ENCODE measurements at regions of chr2 and their contacts with region 1.

Region 1: DNA sequence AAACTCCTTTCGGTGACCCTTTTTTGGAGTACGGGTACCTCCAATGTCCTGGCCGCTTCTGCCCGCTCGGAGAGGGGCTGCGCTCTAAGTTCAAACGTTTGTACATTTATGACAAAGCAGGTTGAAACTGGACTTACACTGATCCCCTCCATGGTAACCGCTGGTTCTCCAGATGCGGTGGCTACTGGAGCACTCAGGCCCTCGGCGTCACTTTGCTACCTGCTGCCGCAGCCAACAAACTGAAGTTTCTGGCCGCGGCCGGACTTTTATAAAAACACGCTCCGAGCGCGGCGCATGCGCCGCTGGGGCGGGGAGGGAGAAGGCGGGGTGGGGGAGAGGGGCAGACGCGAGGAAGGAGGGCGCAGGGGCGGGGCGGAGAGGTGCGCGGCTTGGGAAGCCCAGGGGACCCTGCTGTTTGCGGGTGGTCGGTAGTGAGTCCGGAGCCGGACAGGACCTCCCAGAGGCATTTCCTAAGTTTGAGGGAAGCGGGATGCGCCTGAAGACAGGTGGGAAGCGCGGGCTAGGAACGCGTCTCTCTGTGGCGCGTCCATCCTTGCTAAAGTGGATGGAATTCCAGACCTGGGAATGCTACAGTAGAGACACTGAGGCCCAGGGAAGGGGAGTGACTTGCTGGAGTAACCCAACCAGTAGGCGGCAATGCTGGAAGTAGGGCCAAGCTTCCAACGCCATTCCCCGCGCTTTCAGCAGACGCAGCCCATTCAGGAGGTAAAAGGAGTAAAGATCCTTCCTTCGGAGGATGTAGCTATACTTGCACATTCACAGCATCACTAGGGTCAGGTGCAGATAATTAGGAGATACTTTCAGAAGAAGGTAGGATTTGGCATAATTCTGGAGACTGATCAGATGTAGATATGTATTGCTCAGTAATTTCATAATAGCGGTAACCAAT is at the start of gene CXCR4:
- DNase-seq: peak; percentile 87 to 97 (median 91)
- ATAC-seq: peak; percentile 51
- H3K4me3 ChIP-seq: peak within 1 kb of the TSS; percentile 89
- H3K4me3 Mint-ChIP-seq: peak within 1 kb of the TSS; percentile 84 to 100 (median 98)
- H3K27ac ChIP-seq: peak within 1 kb of the TSS; percentile 94
- H3K27ac Mint-ChIP-seq: peak within 1 kb of the TSS; percentile 98 to 100 (median 99)
- H3K4me1 ChIP-seq: peaks cover 40 to 44% of the 10 kb centered on the region in 2 donors
- H3K4me1 Mint-ChIP-seq: peaks cover 17 to 69% (median 64%) of the 10 kb centered on the region in 7 donors
- H3K27me3 ChIP-seq: no peaks in the 10 kb centered on the region
- H3K27me3 Mint-ChIP-seq: peaks cover 0 to 39% (median 0%) of the 10 kb centered on the region in 5 donors
- total RNA-seq, gene CXCR4: 239 to 1,323 (median 255) TPM

Region 2: DNA sequence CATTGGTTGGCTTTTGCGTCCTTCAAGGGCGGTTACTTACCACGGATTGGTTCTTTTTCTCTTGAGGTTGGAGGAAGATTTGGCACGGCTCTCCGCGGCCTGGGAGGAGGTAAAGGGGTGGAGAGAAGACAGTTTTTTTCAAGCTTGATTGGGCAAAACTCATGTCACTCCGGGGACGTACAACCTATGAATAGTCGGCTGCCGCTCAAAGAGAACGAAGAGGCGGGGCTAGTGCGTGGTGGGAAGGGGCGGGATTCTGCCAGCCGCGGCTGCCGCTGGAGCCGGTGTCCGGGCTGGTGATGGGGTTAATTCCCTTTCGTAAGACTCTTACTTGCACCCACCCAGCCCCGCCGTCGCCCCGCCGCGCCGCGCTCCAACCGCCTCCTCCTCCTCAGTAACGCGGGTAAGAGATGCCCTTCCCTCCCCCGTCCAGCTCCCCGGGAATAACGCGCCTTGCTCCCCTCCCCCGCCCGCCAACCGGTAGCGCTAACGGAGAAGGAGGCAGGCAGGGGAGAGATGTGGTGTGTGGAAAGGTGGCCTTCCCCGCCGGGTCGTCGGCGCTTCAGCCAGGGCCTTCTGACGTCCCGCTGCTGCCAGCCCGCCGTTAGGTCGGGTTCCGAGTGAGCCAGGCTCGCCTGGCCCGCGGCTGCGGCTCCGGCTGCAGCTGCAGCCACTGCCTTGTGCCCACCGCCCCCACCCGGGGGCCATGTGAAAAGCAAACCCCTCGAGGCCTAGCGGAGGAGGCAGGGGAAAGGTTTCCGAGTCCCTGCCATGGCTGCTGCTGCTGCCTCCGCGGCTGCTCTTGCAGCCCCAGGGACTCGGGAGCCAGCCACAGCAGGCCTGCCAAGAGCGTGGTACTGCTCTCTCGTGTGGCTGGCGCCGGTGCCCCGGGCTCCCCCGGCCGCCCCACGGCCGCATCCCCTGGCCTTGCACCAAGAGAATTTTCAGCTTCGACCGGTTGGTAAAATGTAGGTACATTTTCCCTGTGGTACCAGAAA is 586.6 kb before region 1 on chr2 and contains the start of gene R3HDM1:
- CTCF ChIA-PET with region 1: no interaction called
- POLR2A ChIA-PET with region 1: no interaction called
- intact Hi-C with region 1: loop called in 1 of 2 experiments (anchors 2 kb)
- DNase-seq: peak in 8 of 9 donors; percentile 71 to 99 (median 98)
- ATAC-seq: peak; percentile 89
- H3K4me3 ChIP-seq: peak within 1 kb of the TSS; percentile 83
- H3K4me3 Mint-ChIP-seq: no peak within 1 kb of the TSS
- H3K27ac ChIP-seq: peak within 1 kb of the TSS; percentile 84
- H3K27ac Mint-ChIP-seq: peak within 1 kb of the TSS in 7 of 9 donors; percentile 36 to 81 (median 67)
- H3K4me1 ChIP-seq: peaks cover 4 to 21% of the 10 kb centered on the region in 2 donors
- H3K4me1 Mint-ChIP-seq: peaks cover 10 to 39% (median 34%) of the 10 kb centered on the region in 7 donors
- H3K27me3 ChIP-seq: no peaks in the 10 kb centered on the region
- H3K27me3 Mint-ChIP-seq: no peaks in the 10 kb centered on the region
- total RNA-seq, gene R3HDM1: 35.0 to 58.2 (median 47.0) TPM

Region 3: GRCh38 chr2:135853401-135853800 is 264.8 kb before region 1 on chr2:
- CTCF ChIA-PET with region 1: no interaction called
- POLR2A ChIA-PET with region 1: no interaction called
- intact Hi-C with region 1: no loop called
- DNase-seq: no peak
- ATAC-seq: no peak
- H3K4me3 ChIP-seq: no peak overlapping the region
- H3K4me3 Mint-ChIP-seq: no peak overlapping the region
- H3K27ac ChIP-seq: no peak overlapping the region
- H3K27ac Mint-ChIP-seq: no peak overlapping the region
- H3K4me1 ChIP-seq: no peaks in the 10 kb centered on the region
- H3K4me1 Mint-ChIP-seq: peaks cover 0 to 15% (median 0%) of the 10 kb centered on the region in 7 donors
- H3K27me3 ChIP-seq: no peaks in the 10 kb centered on the region
- H3K27me3 Mint-ChIP-seq: no peaks in the 10 kb centered on the region

Region 4: DNA sequence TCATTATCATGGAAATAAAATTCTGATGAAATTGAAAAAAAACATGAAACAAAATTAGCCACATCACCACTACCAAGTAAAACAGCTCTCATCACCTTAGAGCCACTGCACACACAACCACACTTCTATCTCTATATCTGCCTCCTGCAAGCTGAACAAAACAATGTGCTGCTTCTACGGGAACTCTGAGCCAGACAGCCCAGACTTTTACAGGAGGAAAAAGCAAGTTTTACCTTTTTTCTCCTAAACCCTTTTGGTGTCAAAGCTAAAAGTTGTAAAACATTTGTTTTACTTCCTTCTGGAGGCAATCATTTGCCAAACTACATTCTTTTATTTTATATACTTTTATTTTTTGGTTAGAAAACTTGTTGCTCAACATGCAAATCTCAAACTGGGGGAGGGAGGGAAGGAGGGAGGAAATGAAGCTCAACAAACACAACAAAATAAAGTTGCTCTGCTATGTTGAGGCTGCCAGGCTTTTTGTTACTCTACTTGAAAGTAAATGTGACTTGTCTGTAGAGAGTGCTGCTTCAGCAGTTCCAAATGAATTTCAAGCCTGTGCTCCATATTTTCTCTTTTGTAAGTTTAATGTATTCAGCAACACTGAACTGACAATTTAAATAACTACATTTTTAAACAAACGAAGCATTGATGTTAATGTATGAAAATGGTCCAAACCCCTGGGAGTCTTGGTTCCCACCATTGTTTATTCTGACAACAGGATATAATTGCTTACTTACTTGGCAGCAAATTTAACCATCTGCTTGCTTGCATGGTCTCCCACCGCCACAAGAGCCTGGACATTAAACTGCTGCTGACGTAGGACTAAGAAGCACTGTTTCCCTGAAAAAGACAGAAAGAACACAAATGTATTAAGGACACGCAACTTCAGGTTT is 157.3 kb before region 1 on chr2:
- CTCF ChIA-PET with region 1: no interaction called
- POLR2A ChIA-PET with region 1: no interaction called
- intact Hi-C with region 1: loop called in 1 of 2 experiments (anchors 1 kb)
- DNase-seq: peak in 6 of 9 donors; percentile 3 to 44 (median 26)
- ATAC-seq: peak; percentile 76
- H3K4me3 ChIP-seq: no peak overlapping the region
- H3K4me3 Mint-ChIP-seq: peak overlapping the region in 9 of 10 donors; percentile 3 to 79 (median 37)
- H3K27ac ChIP-seq: peak overlapping the region; percentile 40
- H3K27ac Mint-ChIP-seq: peak overlapping the region; percentile 51 to 93 (median 83)
- H3K4me1 ChIP-seq: peaks cover 18 to 26% of the 10 kb centered on the region in 2 donors
- H3K4me1 Mint-ChIP-seq: peaks cover 37 to 67% (median 60%) of the 10 kb centered on the region in 7 donors
- H3K27me3 ChIP-seq: no peaks in the 10 kb centered on the region
- H3K27me3 Mint-ChIP-seq: no peaks in the 10 kb centered on the region

Region 5: GRCh38 chr2:136129601-136130000 is 11.4 kb after region 1 on chr2:
- CTCF ChIA-PET with region 1: interaction called, 14 read pairs
- POLR2A ChIA-PET with region 1: interaction called, 331 read pairs
- intact Hi-C with region 1: loop called (anchors 1 kb)
- DNase-seq: peak in 7 of 9 donors; percentile 80 to 92 (median 88)
- ATAC-seq: peak; percentile 60
- H3K4me3 ChIP-seq: peak overlapping the region; percentile 36
- H3K4me3 Mint-ChIP-seq: peak overlapping the region; percentile 72 to 92 (median 81)
- H3K27ac ChIP-seq: peak overlapping the region; percentile 99
- H3K27ac Mint-ChIP-seq: peak overlapping the region; percentile 94 to 100 (median 99)
- H3K4me1 ChIP-seq: peaks cover 89 to 91% of the 10 kb centered on the region in 2 donors
- H3K4me1 Mint-ChIP-seq: peaks cover 65 to 100% (median 98%) of the 10 kb centered on the region in 7 donors
- H3K27me3 ChIP-seq: no peaks in the 10 kb centered on the region
- H3K27me3 Mint-ChIP-seq: peaks cover 0 to 51% (median 0%) of the 10 kb centered on the region in 5 donors

Region 6: DNA sequence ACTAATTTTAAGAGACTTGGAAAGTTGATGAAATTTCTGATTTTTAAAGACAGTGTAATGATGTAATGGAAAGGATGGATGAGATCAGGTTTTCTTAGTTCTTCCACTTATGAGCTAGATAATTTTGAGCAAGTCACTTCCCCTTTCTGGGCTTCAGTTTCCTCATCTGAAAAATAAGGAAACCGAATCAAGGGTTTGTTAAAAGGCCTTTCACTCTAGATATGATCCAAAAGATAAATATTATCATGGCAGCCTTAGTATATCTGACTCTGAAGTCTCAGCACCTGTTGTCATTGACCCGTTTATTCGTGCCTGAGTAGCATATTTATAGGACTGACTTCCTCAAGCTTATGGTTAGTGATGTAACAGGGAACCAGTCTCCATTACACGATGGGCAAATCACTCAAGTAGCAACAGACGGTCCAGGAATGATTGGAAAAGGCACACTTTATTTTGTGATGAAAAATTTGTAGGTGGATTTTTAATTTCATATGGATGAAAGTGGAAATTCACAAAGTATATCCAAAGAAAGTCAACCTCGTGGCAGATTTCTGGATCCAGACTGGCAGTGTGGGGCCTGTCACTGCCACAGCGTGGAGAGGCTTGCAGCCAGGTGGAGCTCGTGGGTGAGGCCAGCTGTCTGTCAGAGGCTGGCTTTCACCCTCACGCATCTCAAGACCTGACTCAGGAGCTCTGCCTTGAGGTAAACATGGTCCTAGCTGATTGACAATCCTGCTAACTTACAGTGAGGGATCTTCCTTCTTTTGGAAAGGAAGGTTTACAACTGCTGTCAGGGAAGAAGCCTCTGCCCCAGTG is 137.7 kb after region 1 on chr2:
- CTCF ChIA-PET with region 1: no interaction called
- POLR2A ChIA-PET with region 1: interaction called, 5 read pairs
- intact Hi-C with region 1: loop called in 1 of 2 experiments (anchors 1 kb)
- DNase-seq: peak in 7 of 9 donors; percentile 16 to 58 (median 35)
- ATAC-seq: peak; percentile 68
- H3K4me3 ChIP-seq: no peak overlapping the region
- H3K4me3 Mint-ChIP-seq: no peak overlapping the region
- H3K27ac ChIP-seq: no peak overlapping the region
- H3K27ac Mint-ChIP-seq: peak overlapping the region in 8 of 9 donors; percentile 2 to 87 (median 40)
- H3K4me1 ChIP-seq: no peaks in the 10 kb centered on the region
- H3K4me1 Mint-ChIP-seq: peaks cover 7 to 42% (median 27%) of the 10 kb centered on the region in 7 donors
- H3K27me3 ChIP-seq: no peaks in the 10 kb centered on the region
- H3K27me3 Mint-ChIP-seq: no peaks in the 10 kb centered on the region

Region 7: GRCh38 chr2:136384531-136385303 is 266.6 kb after region 1 on chr2:
- CTCF ChIA-PET with region 1: interaction called, 4 read pairs
- POLR2A ChIA-PET with region 1: interaction called, 10 read pairs
- intact Hi-C with region 1: loop called (anchors 1 kb)
- DNase-seq: peak in 7 of 9 donors; percentile 63 to 79 (median 69)
- ATAC-seq: peak; percentile 78
- H3K4me3 ChIP-seq: no peak overlapping the region
- H3K4me3 Mint-ChIP-seq: peak overlapping the region in 6 of 10 donors; percentile 4 to 73 (median 30)
- H3K27ac ChIP-seq: no peak overlapping the region
- H3K27ac Mint-ChIP-seq: peak overlapping the region; percentile 37 to 98 (median 92)
- H3K4me1 ChIP-seq: peaks cover 22 to 25% of the 10 kb centered on the region in 2 donors
- H3K4me1 Mint-ChIP-seq: peaks cover 21 to 46% (median 40%) of the 10 kb centered on the region in 7 donors
- H3K27me3 ChIP-seq: no peaks in the 10 kb centered on the region
- H3K27me3 Mint-ChIP-seq: no peaks in the 10 kb centered on the region

Region 8: GRCh38 chr2:137031731-137032130 is 913.6 kb after region 1 on chr2:
- CTCF ChIA-PET with region 1: no interaction called
- POLR2A ChIA-PET with region 1: no interaction called
- intact Hi-C with region 1: no loop called
- DNase-seq: no peak
- ATAC-seq: no peak
- H3K4me3 ChIP-seq: no peak overlapping the region
- H3K4me3 Mint-ChIP-seq: no peak overlapping the region
- H3K27ac ChIP-seq: no peak overlapping the region
- H3K27ac Mint-ChIP-seq: no peak overlapping the region
- H3K4me1 ChIP-seq: no peaks in the 10 kb centered on the region
- H3K4me1 Mint-ChIP-seq: no peaks in the 10 kb centered on the region
- H3K27me3 ChIP-seq: no peaks in the 10 kb centered on the region
- H3K27me3 Mint-ChIP-seq: no peaks in the 10 kb centered on the region